Esophagus muscularis mucosa (tissue), 4 donors: ENCODE measurements at regions of chr5 and their contacts with region 1.

Region 1: DNA sequence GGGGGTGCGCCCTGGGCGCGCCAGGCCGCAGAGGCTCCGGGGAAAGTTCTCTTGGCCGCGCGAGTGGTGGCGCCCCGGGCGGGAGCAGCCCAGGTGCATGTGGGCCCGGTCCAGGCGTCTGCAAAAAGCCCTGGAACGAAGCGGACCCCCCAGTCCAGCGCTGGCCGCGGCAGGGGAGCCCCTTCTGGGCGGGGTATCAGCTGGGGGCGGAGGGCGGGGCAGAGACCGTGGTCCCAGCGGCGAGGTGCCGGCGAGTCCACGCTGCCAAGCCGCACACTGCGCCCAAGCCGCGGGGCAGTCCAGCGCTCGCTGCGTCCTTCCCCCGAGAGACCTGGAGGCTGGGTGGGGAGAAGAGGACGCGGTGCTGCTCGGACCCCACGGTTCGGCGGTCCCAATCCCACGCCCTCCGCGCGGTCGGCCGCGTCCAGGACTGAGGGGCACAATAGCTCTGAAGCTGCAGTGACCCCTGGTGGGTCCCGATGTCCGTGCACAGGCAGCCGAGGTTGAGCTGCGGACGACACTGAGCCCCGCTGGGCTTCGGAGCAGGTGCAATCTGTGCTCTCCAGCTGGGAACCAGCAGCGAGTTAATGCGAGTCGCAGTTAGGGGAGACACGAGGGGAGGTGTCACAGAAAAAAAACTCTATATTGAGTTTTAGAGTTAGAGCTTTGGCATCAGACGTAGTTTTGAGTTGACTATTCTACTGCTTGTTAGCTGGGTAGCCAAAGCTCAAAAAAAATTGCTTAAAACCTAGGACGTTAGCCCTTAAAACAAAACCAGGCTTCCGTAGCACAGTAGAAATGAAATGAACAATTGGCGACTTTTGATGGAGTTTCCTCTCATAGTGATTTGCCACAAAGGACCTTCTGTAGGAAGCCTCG is 1.1 kb upstream of the EPB41L4A start:
- DNase-seq: peak; percentile 94
- H3K4me3 ChIP-seq: peak overlapping the region; percentile 73 to 97 (median 86)
- H3K27ac ChIP-seq: peak overlapping the region; percentile 79 to 87 (median 84)
- H3K4me1 ChIP-seq: peaks cover 11 to 25% (median 14%) of the 10 kb centered on the region in 4 donors
- H3K27me3 ChIP-seq: no peaks in the 10 kb centered on the region
- CTCF ChIP-seq: peak; percentile 84 to 95 (median 92)
- EP300 ChIP-seq: no peak
- POLR2A ChIP-seq: no peak

Region 2: GRCh38 chr5:112165897-112166806 is 254.1 kb before region 1 on chr5:
- intact Hi-C with region 1: loop called (anchors 5 kb)
- DNase-seq: no peak
- H3K4me3 ChIP-seq: no peak overlapping the region
- H3K27ac ChIP-seq: no peak overlapping the region
- H3K4me1 ChIP-seq: peaks cover 16 to 22% (median 20%) of the 10 kb centered on the region in 4 donors
- H3K27me3 ChIP-seq: no peaks in the 10 kb centered on the region
- CTCF ChIP-seq: no peak
- EP300 ChIP-seq: no peak
- POLR2A ChIP-seq: no peak

Region 3: DNA sequence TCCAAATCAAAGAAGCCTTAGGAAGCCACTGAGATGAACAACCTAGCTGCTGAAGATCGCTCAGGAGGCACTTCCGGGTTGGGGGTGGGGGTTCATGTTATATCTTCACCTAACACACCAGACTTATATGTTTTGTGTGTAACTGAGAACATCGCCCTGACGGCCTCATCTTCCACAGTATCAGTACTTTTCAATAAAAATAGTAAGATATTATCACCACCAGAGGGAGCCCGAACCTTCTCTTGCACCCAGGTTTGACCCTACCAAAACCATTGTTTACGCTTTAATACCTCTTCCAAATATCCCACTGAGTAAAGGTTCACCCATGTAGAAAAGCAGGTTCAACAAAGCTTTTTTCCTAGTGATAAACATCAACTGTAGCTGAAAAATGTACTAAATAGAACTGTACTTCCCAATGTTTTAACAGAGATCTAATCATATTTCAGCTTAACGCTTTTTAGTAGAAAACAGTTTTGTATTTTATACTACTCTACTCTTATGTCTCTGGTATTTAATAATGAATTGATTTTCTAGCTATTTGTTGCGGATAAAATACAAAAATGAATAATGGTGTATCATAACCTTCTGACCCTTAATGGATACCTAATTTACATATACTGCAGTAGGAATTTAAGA is 245.1 kb before region 1 on chr5:
- intact Hi-C with region 1: loop called (anchors 5 kb)
- DNase-seq: no peak
- H3K4me3 ChIP-seq: no peak overlapping the region
- H3K27ac ChIP-seq: no peak overlapping the region
- H3K4me1 ChIP-seq: peaks cover 0 to 5% (median 2%) of the 10 kb centered on the region in 4 donors
- H3K27me3 ChIP-seq: no peaks in the 10 kb centered on the region
- CTCF ChIP-seq: peak; percentile 56 to 64 (median 59)
- EP300 ChIP-seq: no peak
- POLR2A ChIP-seq: no peak

Region 4: DNA sequence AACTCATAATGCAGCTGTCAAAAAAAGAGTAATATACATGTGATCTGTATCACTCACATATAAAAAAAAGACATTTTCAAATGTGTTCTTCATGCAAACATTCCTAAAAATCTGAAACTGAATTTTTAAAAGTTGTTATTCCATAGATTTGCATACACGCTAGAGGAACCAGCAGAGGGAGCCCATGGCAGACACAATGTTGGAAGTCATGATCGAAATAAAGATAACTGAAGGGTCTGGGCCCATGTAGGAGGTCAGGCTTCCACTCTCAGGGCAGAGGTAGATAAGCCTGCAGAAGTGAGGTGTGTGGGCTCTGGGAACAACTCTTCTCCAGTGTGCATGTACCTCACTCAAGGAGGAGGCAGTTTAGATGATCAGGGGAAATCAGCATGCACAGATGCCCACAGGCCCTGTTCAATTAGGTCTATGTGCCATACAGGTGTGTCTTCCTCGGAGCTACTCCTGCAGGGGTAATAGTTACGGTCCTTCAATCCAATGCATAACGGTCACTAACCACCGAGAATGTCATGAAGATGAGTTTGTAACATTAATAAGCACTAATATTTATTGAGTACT is 209.7 kb before region 1 on chr5:
- intact Hi-C with region 1: loop called (anchors 2 kb)
- DNase-seq: no peak
- H3K4me3 ChIP-seq: no peak overlapping the region
- H3K27ac ChIP-seq: no peak overlapping the region
- H3K4me1 ChIP-seq: peaks cover 0 to 6% (median 0%) of the 10 kb centered on the region in 4 donors
- H3K27me3 ChIP-seq: no peaks in the 10 kb centered on the region
- CTCF ChIP-seq: peak; percentile 56 to 66 (median 65)
- EP300 ChIP-seq: no peak
- POLR2A ChIP-seq: no peak

Region 5: GRCh38 chr5:112445626-112446350 is 25.6 kb after region 1 on chr5:
- intact Hi-C with region 1: no loop called
- DNase-seq: no peak
- H3K4me3 ChIP-seq: no peak overlapping the region
- H3K27ac ChIP-seq: no peak overlapping the region
- H3K4me1 ChIP-seq: no peaks in the 10 kb centered on the region
- H3K27me3 ChIP-seq: no peaks in the 10 kb centered on the region
- CTCF ChIP-seq: no peak
- EP300 ChIP-seq: no peak
- POLR2A ChIP-seq: no peak